ENCODE measurements at regions of chr2 and their contacts with region 1.

Region 1: DNA sequence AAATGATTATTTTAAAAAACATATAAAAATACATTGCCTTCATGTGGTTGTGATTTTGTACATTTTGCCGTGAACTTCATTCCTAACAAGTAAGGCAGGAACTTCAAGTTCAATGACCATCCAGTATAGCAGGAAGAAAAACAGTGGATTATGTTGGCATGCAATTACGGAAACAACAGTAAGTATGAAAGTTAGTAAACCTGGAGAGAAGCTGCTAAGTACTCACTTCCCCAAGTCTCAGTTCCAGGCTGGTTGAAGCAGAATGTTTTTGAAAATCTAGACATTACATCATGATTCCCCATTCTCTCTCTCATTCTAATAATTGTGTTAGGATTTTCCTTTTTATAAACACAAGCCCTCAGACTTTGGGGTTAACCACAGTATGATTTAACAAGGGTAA is 987.1 kb upstream of the KLHL29 start:
- DNase-seq: no peak
- ATAC-seq: no peak
- H3K4me3 ChIP-seq: no peak overlapping the region
- H3K27ac ChIP-seq: no peak overlapping the region
- H3K4me1 ChIP-seq: no peaks in the 10 kb centered on the region
- H3K27me3 ChIP-seq: no peaks in the 10 kb centered on the region
- CTCF ChIP-seq: no peak
- EP300 ChIP-seq: no peak
- POLR2A ChIP-seq: no peak
- RAD21 ChIP-seq: no peak

Region 2: DNA sequence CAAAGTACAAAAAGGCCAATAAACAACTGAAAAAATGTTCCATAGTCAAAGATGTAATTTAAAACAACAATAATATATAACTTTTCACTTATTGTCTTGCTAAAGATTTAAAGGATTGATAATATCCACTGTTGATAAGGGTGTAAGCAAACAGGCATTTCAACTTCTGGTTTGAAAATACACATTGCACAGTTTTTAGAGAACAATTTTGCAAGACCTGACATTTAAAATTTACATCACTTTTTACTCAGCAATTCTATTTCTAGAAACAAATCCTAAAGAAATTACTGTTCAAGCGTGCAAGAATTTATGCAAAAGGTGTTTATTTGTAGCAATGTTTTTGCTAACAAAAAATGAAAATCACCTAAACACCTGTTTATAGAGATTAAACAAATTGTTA is 1153.7 kb before region 1 on chr2:
- CTCF ChIA-PET with region 1: no interaction called
- POLR2A ChIA-PET with region 1: no interaction called
- in situ Hi-C with region 1: no loop called
- intact Hi-C with region 1: loop called (anchors 5 kb)
- DNase-seq: no peak
- ATAC-seq: no peak
- H3K4me3 ChIP-seq: no peak overlapping the region
- H3K27ac ChIP-seq: no peak overlapping the region
- H3K4me1 ChIP-seq: no peaks in the 10 kb centered on the region
- H3K27me3 ChIP-seq: no peaks in the 10 kb centered on the region
- CTCF ChIP-seq: no peak
- EP300 ChIP-seq: no peak
- POLR2A ChIP-seq: no peak
- RAD21 ChIP-seq: no peak

Region 3: DNA sequence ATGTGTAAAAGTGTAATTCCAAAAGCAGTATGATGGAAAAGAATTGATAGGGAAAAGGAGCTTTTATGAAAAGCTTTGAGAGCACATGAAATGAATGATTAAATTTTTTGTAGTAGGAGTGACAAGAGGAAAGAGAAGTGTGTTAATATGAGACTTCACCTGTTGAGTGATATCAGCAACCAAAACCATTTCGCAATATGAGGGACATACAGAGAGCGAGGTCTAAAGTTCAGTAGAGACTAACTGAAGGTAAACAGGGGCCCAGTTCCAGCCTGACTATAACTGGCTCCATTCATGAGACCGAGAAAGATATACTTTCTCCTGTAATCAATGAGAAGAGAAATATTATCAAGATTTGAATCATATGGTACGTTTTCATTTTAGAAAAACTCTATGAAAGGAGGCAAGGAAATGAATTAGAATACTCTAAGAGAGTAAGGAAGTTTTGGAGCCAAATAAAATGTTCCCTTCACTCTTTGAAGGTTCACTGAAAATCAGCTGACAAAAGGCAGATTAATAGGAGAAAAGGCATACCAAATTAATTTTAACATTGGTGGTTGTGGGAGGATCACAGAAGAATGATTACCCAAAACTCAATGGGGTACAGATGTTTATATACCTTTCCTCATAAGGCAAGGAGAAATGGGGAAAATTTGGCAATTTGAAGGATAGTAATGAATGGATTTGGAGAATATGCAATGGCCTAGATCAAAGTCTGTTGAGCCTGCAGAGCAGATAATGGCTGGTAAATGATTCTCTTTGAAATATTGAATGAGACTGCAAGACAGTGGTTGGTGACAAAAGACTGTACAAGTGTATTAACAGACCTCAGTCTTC is 341.8 kb before region 1 on chr2:
- CTCF ChIA-PET with region 1: no interaction called
- POLR2A ChIA-PET with region 1: no interaction called
- in situ Hi-C with region 1: no loop called
- intact Hi-C with region 1: no loop called
- DNase-seq: peak; percentile 97
- ATAC-seq: peak; percentile 98
- H3K4me3 ChIP-seq: peak overlapping the region in 2 of 3 experiments; percentile 31 to 52; a peak in 3 of 6 replicates
- H3K27ac ChIP-seq: peak overlapping the region; percentile 93
- H3K4me1 ChIP-seq: peaks cover 24% of the 10 kb centered on the region
- H3K27me3 ChIP-seq: no peaks in the 10 kb centered on the region
- CTCF ChIP-seq: no peak
- EP300 ChIP-seq: peak; percentile 94 to 96; a peak in 3 of 4 replicates
- POLR2A ChIP-seq: no peak; a peak in 1 of 4 replicates
- RAD21 ChIP-seq: peak; percentile 42; the same call in 1 of the 2 replicates

Region 4: DNA sequence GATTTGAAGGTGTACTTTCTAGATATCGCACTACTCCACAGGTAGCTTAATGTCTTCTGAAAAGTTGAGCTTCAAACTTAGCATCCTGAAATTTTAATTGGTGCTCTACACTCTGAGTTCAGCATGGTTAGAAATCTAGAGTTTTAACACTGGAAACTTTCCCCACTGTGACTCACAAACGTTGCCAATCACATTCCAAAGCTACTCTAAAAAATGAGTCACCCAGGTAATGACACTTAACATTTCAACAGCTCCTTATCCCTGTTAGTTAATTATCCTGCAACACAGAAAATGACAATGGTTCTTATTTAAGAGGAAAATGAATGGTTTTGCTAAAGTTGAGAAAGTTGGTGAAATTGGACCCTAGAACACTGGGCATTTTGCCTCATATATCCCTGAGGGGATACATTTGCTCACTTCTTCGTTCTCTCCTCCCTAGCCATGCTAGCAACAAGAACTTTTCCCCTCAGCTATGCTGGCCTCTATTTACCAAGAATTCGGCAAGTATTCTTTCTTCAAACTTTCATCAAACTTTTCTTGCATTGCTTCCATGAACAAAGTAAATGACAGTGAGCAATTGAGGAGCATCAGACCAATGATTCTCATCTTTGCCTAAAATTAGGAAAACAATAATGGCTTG is 37.0 kb before region 1 on chr2:
- CTCF ChIA-PET with region 1: no interaction called
- POLR2A ChIA-PET with region 1: no interaction called
- in situ Hi-C with region 1: no loop called
- intact Hi-C with region 1: no loop called
- DNase-seq: no peak
- ATAC-seq: no peak
- H3K4me3 ChIP-seq: no peak overlapping the region
- H3K27ac ChIP-seq: no peak overlapping the region
- H3K4me1 ChIP-seq: no peaks in the 10 kb centered on the region
- H3K27me3 ChIP-seq: no peaks in the 10 kb centered on the region
- CTCF ChIP-seq: no peak
- EP300 ChIP-seq: no peak
- POLR2A ChIP-seq: no peak
- RAD21 ChIP-seq: no peak

Region 5: DNA sequence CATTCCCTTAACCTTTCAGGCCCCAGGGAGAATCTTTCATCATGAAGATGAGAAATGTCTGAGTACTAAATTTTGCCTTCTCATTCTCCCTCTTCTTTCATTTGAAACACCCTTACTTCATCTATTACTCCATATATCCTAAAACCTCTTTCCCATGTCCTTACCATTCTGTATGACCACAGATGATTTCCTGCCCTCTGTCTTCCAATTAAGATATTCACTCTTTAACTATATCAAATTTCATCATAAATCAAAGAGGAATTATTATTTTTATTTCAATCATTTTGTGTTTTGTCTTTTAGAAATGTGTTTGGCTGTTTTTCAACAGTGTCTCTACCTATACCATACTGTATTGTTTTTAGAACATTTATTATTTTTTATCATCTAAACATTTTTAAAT is 22.2 kb after region 1 on chr2:
- CTCF ChIA-PET with region 1: no interaction called
- POLR2A ChIA-PET with region 1: no interaction called
- in situ Hi-C with region 1: no loop called
- intact Hi-C with region 1: no loop called
- DNase-seq: no peak
- ATAC-seq: no peak
- H3K4me3 ChIP-seq: no peak overlapping the region
- H3K27ac ChIP-seq: no peak overlapping the region
- H3K4me1 ChIP-seq: no peaks in the 10 kb centered on the region
- H3K27me3 ChIP-seq: no peaks in the 10 kb centered on the region; a peak in 1 of 5 replicates
- CTCF ChIP-seq: no peak
- EP300 ChIP-seq: no peak
- POLR2A ChIP-seq: no peak
- RAD21 ChIP-seq: no peak

Measured in HepG2 (cell line).